Activated B cell treated with CpG ODN at 0.5 μM for 24 hours (primary cell): ENCODE measurements at regions of chr7 and their contacts with region 1.

Region 1: DNA sequence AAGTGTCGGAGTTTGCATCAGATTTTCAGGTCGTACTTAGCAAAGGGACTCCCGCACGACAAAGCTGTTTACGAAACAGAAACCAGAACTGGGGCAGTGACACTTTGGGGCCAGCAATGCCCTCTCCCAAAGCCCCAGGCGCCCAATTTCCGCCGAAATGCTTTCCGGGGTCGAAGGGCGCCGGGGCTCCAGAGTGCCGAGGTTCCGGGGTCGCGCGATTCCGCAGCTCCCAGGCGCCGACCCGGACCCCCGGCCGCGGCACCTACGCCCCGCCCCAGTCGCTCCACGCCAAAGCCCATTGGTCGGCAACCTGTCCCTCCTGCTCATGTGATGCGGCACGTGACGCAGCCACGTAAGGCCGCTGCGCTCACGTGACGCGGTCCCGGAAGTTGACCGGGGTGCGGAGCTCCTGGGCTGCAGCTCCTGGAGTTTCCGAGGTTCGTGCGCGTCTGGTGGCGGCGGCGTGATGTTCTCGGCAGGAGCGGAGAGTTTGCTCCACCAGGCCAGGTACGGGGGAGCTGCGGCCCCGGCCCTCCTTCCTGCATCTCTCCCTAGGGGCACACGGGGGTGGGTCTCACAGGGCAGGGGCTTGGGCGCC is at the start of gene AP5Z1:
- DNase-seq: peak; percentile 91
- ATAC-seq: peak; percentile 94
- H3K4me3 Mint-ChIP-seq: peak within 1 kb of the TSS; percentile 99
- H3K27ac Mint-ChIP-seq: peak within 1 kb of the TSS; percentile 98
- H3K4me1 Mint-ChIP-seq: peaks cover 41% of the 10 kb centered on the region
- H3K27me3 Mint-ChIP-seq: no peaks in the 10 kb centered on the region
- CTCF ChIP-seq: no peak
- total RNA-seq, gene AP5Z1: 98.3 and 111 TPM in 2 replicates

Region 2: GRCh38 chr7:3300651-3301378 is 1474.5 kb before region 1 on chr7 and contains the start of gene SDK1:
- CTCF ChIA-PET with region 1: no interaction called
- POLR2A ChIA-PET with region 1: no interaction called
- intact Hi-C with region 1: loop called (anchors 5 kb)
- DNase-seq: peak; percentile 94
- ATAC-seq: peak; percentile 95
- H3K4me3 Mint-ChIP-seq: peak within 1 kb of the TSS; percentile 84
- H3K27ac Mint-ChIP-seq: no peak within 1 kb of the TSS
- H3K4me1 Mint-ChIP-seq: peaks cover 11% of the 10 kb centered on the region
- H3K27me3 Mint-ChIP-seq: peaks cover 33% of the 10 kb centered on the region
- CTCF ChIP-seq: no peak
- total RNA-seq, gene SDK1: 0.32 and 1.3 TPM in 2 replicates

Region 3: GRCh38 chr7:4667776-4668509 is 107.4 kb before region 1 on chr7:
- CTCF ChIA-PET with region 1: no interaction called
- POLR2A ChIA-PET with region 1: no interaction called
- intact Hi-C with region 1: no loop called
- DNase-seq: no peak
- ATAC-seq: no peak
- H3K4me3 Mint-ChIP-seq: no peak overlapping the region
- H3K27ac Mint-ChIP-seq: no peak overlapping the region
- H3K4me1 Mint-ChIP-seq: no peaks in the 10 kb centered on the region
- H3K27me3 Mint-ChIP-seq: peaks cover 7% of the 10 kb centered on the region
- CTCF ChIP-seq: no peak

Region 4: GRCh38 chr7:4725014-4725849 is 50.1 kb before region 1 on chr7:
- CTCF ChIA-PET with region 1: no interaction called
- POLR2A ChIA-PET with region 1: interaction called, 10 read pairs
- intact Hi-C with region 1: loop called (anchors 1 kb)
- DNase-seq: peak; percentile 39
- ATAC-seq: peak; percentile 76
- H3K4me3 Mint-ChIP-seq: peak overlapping the region; percentile 90
- H3K27ac Mint-ChIP-seq: peak overlapping the region; percentile 84
- H3K4me1 Mint-ChIP-seq: peaks cover 52% of the 10 kb centered on the region
- H3K27me3 Mint-ChIP-seq: no peaks in the 10 kb centered on the region
- CTCF ChIP-seq: no peak

Region 5: GRCh38 chr7:4753711-4754432 is 21.5 kb before region 1 on chr7:
- CTCF ChIA-PET with region 1: no interaction called
- POLR2A ChIA-PET with region 1: interaction called, 5 read pairs
- intact Hi-C with region 1: loop called (anchors 1 kb)
- DNase-seq: peak; percentile 75
- ATAC-seq: peak; percentile 94
- H3K4me3 Mint-ChIP-seq: no peak overlapping the region
- H3K27ac Mint-ChIP-seq: no peak overlapping the region
- H3K4me1 Mint-ChIP-seq: peaks cover 10% of the 10 kb centered on the region
- H3K27me3 Mint-ChIP-seq: no peaks in the 10 kb centered on the region
- CTCF ChIP-seq: no peak

Region 6: GRCh38 chr7:4883374-4884144 is 108.2 kb after region 1 on chr7 and contains the start of gene RADIL:
- CTCF ChIA-PET with region 1: no interaction called
- POLR2A ChIA-PET with region 1: no interaction called
- intact Hi-C with region 1: no loop called
- DNase-seq: peak; percentile 62
- ATAC-seq: peak; percentile 97
- H3K4me3 Mint-ChIP-seq: peak within 1 kb of the TSS; percentile 46
- H3K27ac Mint-ChIP-seq: no peak within 1 kb of the TSS
- H3K4me1 Mint-ChIP-seq: peaks cover 12% of the 10 kb centered on the region
- H3K27me3 Mint-ChIP-seq: peaks cover 45% of the 10 kb centered on the region
- CTCF ChIP-seq: no peak
- total RNA-seq, gene RADIL: not detected in 2 replicates

Region 7: GRCh38 chr7:5045558-5046396 is 270.4 kb after region 1 on chr7 and contains the start of gene RBAK:
- CTCF ChIA-PET with region 1: no interaction called
- POLR2A ChIA-PET with region 1: interaction called, 12 read pairs
- intact Hi-C with region 1: loop called (anchors 1 kb)
- DNase-seq: peak; percentile 83
- ATAC-seq: peak; percentile 99
- H3K4me3 Mint-ChIP-seq: peak within 1 kb of the TSS; percentile 92
- H3K27ac Mint-ChIP-seq: peak within 1 kb of the TSS; percentile 79
- H3K4me1 Mint-ChIP-seq: peaks cover 21% of the 10 kb centered on the region
- H3K27me3 Mint-ChIP-seq: no peaks in the 10 kb centered on the region
- CTCF ChIP-seq: no peak
- total RNA-seq, gene RBAK: 16.3 and 20.2 TPM in 2 replicates